Activated CD4-positive, alpha-beta T cell treated with anti-CD3 and anti-CD28 coated beads for 36 hours (primary cell): ENCODE measurements at regions of chr18 and their contacts with region 1.

Region 1: DNA sequence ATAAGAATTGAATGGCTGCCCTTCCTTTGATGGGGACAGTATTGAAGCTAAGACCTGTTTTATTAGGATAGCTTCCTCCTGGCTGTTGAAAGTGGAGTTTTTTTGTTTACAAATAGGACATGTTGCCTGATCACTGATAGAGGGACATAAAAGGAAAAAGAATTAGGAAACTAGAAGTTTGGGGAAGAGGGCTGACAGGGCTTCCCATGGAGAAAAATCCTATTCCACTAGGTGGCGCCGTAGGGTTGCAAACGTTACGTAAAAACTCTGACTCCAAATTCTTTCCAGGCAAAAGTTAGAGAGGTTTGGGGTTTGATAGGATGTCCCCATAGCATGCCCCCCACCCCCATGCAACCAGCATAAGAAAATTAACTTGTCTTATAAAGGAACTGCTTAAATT is 11.1 kb upstream of the RBFA start:
- DNase-seq: peak; percentile 54
- ATAC-seq: no peak
- H3K4me3 Mint-ChIP-seq: no peak overlapping the region
- H3K27ac Mint-ChIP-seq: no peak overlapping the region
- H3K4me1 Mint-ChIP-seq: no peaks in the 10 kb centered on the region
- H3K27me3 Mint-ChIP-seq: no peaks in the 10 kb centered on the region

Region 2: GRCh38 chr18:80086281-80086680 is 63.1 kb after region 1 on chr18:
- CTCF ChIA-PET with region 1: no interaction called
- POLR2A ChIA-PET with region 1: no interaction called
- intact Hi-C with region 1: loop called in 1 of 2 experiments (anchors 5 kb)
- DNase-seq: no peak
- ATAC-seq: no peak
- H3K4me3 Mint-ChIP-seq: no peak overlapping the region
- H3K27ac Mint-ChIP-seq: no peak overlapping the region
- H3K4me1 Mint-ChIP-seq: no peaks in the 10 kb centered on the region
- H3K27me3 Mint-ChIP-seq: peaks cover 6% of the 10 kb centered on the region

Region 3: GRCh38 chr18:80210312-80211083 is 187.3 kb after region 1 on chr18:
- CTCF ChIA-PET with region 1: no interaction called
- POLR2A ChIA-PET with region 1: no interaction called
- intact Hi-C with region 1: no loop called
- DNase-seq: no peak
- ATAC-seq: no peak
- H3K4me3 Mint-ChIP-seq: no peak overlapping the region
- H3K27ac Mint-ChIP-seq: no peak overlapping the region
- H3K4me1 Mint-ChIP-seq: no peaks in the 10 kb centered on the region
- H3K27me3 Mint-ChIP-seq: peaks cover 36% of the 10 kb centered on the region